ENCODE measurements at regions of chr17 and their contacts with region 1.

Region 1: GRCh38 chr17:65139101-65139764 is 2.1 kb downstream of the RGS9 start:
- DNase-seq: no peak
- ATAC-seq: no peak
- H3K4me3 Mint-ChIP-seq: peak overlapping the region in 7 of 10 donors; percentile 4 to 66 (median 49)
- H3K27ac Mint-ChIP-seq: peak overlapping the region in 4 of 10 donors; percentile 57 to 81 (median 65)
- H3K4me1 Mint-ChIP-seq: peaks cover 17 to 29% (median 27%) of the 10 kb centered on the region in 4 donors
- H3K27me3 Mint-ChIP-seq: peaks cover 16 to 36% (median 20%) of the 10 kb centered on the region in 5 donors

Region 2: DNA sequence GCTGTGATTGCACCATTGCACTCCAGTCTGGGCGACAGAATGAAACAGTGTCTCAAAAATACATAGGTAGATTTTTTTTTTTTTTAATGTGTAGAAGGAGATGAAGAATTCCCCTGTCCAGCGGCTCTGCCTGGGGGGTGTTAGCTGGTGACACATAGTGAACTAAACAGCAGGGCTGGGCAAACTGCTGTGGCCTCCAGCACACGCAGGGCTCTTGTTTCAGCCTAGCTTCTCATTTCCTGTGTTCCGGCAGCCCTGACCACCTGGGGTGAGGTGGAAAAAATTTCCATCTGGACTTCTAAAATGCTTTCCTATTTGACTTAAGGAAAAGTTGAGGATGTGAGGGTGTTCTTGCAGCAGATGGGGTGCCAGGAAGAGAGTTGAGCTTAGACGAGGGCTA is 35.3 kb before region 1 on chr17:
- POLR2A ChIA-PET with region 1: no interaction called
- DNase-seq: no peak
- ATAC-seq: no peak
- H3K4me3 Mint-ChIP-seq: no peak overlapping the region
- H3K27ac Mint-ChIP-seq: peak overlapping the region in 1 of 10 donors; percentile 27
- H3K4me1 Mint-ChIP-seq: peaks cover 5 to 16% (median 9%) of the 10 kb centered on the region in 4 donors
- H3K27me3 Mint-ChIP-seq: peaks cover 0 to 10% (median 5%) of the 10 kb centered on the region in 5 donors

Region 3: DNA sequence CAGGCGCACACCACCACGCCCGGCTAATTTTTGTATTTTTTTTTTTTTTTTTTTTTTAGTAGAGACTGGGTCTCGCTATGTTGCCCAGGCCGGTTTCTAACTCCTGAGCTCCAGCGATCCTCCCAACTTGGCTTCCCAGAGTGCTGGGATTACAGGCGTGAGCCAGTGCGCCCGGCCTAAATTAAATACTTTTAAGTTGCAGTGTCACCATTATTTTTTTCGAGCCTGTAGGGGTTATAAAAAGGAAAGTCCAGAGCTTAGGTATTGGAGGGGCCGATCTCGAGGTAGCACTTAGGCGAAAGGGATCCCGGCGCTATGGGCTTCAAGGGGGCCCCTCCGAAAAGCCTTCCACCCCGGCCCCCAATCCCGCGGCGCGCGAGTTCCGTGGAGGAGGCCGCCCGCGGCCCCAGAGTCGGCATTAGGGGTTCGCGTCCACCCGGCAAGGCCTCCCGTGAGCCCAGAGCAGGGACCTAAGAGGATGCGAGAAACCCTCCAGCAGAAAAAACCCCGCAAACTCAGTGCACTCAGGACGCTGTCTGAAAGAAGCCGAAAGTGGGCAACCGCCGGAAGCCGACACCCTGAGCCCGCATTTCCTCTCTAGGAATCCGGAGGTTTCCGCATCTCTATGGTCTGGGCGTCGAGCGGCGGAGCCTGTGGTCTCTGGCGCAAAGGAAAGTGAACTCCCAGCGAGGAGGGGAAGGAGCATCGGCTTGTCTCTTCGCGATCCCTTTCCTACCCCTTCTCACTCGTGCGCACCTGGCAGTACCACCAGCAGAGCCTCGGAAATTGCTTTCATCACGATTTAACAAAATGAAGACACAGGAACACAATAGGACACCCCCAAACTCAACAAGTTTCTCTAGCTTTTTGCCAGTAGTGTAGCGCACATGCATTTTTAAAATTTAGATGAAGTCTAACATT is 16.1 kb before region 1 on chr17:
- POLR2A ChIA-PET with region 1: interaction called, 12 read pairs
- DNase-seq: peak; percentile 57 to 93 (median 82)
- ATAC-seq: peak; percentile 88 to 97
- H3K4me3 Mint-ChIP-seq: peak overlapping the region; percentile 84 to 96 (median 92)
- H3K27ac Mint-ChIP-seq: peak overlapping the region; percentile 96 to 100 (median 98)
- H3K4me1 Mint-ChIP-seq: peaks cover 5 to 24% (median 10%) of the 10 kb centered on the region in 4 donors
- H3K27me3 Mint-ChIP-seq: peaks cover 3 to 6% (median 5%) of the 10 kb centered on the region in 5 donors